Ovary (tissue), 10 donors: ENCODE measurements at regions of chr3 and their contacts with region 1.

Region 1: GRCh38 chr3:8982509-8982908 is 19.2 kb upstream of the RAD18 start:
- DNase-seq: no peak
- H3K4me3 ChIP-seq: no peak overlapping the region
- H3K27ac ChIP-seq: no peak overlapping the region
- H3K4me1 ChIP-seq: no peaks in the 10 kb centered on the region
- H3K27me3 ChIP-seq: no peaks in the 10 kb centered on the region
- CTCF ChIP-seq: no peak
- EP300 ChIP-seq: no peak
- POLR2A ChIP-seq: no peak

Region 2: GRCh38 chr3:8301728-8302462 is 680.6 kb before region 1 on chr3:
- intact Hi-C with region 1: no loop called
- DNase-seq: no peak
- H3K4me3 ChIP-seq: no peak overlapping the region
- H3K27ac ChIP-seq: no peak overlapping the region
- H3K4me1 ChIP-seq: peaks cover 1% of the 10 kb centered on the region
- H3K27me3 ChIP-seq: no peaks in the 10 kb centered on the region
- CTCF ChIP-seq: peak in 2 of 3 donors; percentile 29 to 33
- EP300 ChIP-seq: no peak
- POLR2A ChIP-seq: no peak

Region 3: DNA sequence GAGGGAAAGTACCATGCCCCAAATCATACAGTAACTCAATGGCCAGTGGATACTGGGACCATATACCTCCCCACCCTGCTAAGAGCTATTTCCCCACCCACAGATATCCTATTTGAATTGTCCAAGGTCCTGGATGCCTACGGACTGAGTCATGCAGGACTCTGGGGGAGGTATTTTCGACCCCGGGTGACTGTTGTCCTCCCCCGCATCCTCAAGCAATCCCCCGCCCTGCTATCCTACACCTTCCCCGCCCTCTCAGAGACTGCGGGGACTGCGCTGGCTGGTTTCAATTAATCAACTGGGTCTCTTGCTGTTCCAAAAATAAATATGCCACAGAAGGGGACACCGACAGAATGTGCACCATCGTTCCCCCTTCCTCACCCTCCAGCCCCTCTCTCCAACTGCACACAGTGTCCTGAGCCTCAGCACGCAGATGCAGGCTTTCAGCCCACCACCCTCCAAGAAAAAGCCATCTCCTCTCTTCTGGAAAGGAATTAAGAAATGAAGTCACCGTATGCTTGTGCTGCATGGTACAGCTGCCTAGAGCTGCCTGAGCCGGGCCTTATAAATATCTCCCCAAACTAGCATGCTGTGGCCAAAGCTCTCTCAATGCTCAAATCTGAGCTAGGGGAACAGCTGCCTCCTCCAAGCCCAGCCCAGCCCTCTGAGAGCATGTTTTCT is 240.8 kb before region 1 on chr3:
- intact Hi-C with region 1: no loop called
- DNase-seq: peak; percentile 43 to 56 (median 53)
- H3K4me3 ChIP-seq: no peak overlapping the region
- H3K27ac ChIP-seq: no peak overlapping the region
- H3K4me1 ChIP-seq: peaks cover 7% of the 10 kb centered on the region
- H3K27me3 ChIP-seq: no peaks in the 10 kb centered on the region
- CTCF ChIP-seq: no peak
- EP300 ChIP-seq: no peak
- POLR2A ChIP-seq: no peak

Region 4: GRCh38 chr3:8970971-8971589 is 11.4 kb before region 1 on chr3:
- intact Hi-C with region 1: no loop called
- DNase-seq: peak; percentile 48 to 76 (median 70)
- H3K4me3 ChIP-seq: no peak overlapping the region
- H3K27ac ChIP-seq: no peak overlapping the region
- H3K4me1 ChIP-seq: no peaks in the 10 kb centered on the region
- H3K27me3 ChIP-seq: no peaks in the 10 kb centered on the region
- CTCF ChIP-seq: peak; percentile 90 to 96 (median 95)
- EP300 ChIP-seq: no peak
- POLR2A ChIP-seq: no peak

Region 5: DNA sequence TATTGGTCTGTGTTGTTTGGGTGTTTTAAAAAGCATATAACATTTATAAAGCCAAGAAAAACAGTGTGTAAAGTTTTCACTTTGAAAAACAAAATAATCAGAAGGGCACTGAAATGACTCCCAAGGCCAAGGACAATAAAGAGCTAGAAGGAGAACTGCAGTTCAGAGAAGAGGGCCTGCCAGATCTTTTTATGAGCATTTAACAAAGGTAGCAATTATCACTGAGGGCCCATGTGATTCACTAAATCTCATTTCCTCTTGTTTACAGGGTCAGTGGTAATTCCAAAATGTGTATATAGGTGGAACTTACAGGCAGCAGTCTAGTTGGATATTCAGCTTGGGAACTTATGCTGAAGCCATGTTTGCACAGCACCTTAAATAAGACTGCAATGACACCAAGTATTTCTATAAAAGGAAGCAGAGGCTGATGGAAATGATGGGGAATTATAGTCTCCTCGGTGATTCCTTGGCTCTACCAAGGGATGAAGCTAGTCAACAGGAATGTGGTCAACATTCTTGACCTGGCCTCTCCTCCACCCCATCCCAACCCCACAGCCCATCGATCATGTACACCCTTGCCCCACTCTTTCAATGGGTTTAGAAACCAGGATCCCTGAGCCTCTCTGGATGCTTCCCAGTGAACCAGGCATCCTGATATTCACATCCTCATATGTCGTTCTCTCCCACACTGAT is 325.9 kb after region 1 on chr3:
- intact Hi-C with region 1: loop called in 3 of 4 experiments (anchors 5 kb)
- DNase-seq: no peak
- H3K4me3 ChIP-seq: no peak overlapping the region
- H3K27ac ChIP-seq: no peak overlapping the region
- H3K4me1 ChIP-seq: peaks cover 9% of the 10 kb centered on the region
- H3K27me3 ChIP-seq: no peaks in the 10 kb centered on the region
- CTCF ChIP-seq: no peak
- EP300 ChIP-seq: no peak
- POLR2A ChIP-seq: no peak